ENCODE measurements at regions of chr6 and their contacts with region 1.

Region 1: GRCh38 chr6:157667211-157668008 is 155.6 kb upstream of the SNX9 start:
- DNase-seq: peak; percentile 82
- ATAC-seq: peak; percentile 74
- H3K4me3 ChIP-seq: no peak overlapping the region
- H3K4me3 Mint-ChIP-seq: peak overlapping the region; percentile 59
- H3K27ac ChIP-seq: no peak overlapping the region
- H3K27ac Mint-ChIP-seq: peak overlapping the region; percentile 48
- H3K4me1 ChIP-seq: peaks cover 9 to 10% of the 10 kb centered on the region in 2 donors
- H3K4me1 Mint-ChIP-seq: peaks cover 8% of the 10 kb centered on the region
- H3K27me3 ChIP-seq: no peaks in the 10 kb centered on the region
- H3K27me3 Mint-ChIP-seq: no peaks in the 10 kb centered on the region
- CTCF ChIP-seq: peak; percentile 95

Region 2: DNA sequence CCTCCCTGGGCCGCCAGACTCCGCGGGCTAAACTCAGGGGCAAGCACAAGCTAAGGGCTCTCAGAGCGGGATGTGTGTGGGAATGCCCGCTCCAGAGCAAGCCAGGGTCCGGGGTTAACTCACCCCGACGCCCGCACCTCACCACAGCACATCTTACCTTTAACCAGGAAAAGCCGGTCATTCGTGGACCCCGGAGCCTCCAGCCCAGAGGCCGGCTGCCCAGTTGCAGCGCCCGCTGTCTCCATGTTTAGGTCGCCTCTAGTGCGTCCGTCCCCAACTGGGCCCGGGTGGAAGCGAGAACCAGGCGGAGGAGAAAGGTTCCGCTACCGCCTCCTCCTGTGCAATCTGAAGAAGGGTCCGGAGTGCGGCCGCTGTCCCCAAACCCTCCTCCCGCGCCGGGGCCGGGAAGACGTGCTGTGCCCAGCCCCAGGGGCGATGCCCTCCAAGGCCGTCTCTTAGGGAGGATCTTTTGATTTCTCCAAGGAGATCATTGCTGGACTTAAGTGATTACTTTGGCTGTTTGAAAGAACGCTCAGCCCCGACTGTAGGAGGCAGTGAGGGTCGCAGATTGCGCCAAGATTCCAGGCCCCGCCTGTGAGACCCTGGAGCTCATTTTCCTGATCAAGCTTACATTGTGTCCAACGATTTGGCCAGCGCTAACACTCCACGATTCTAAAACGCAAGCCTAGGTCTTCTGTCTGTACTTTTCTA is 344.0 kb before region 1 on chr6 and contains the start of gene TMEM242:
- CTCF ChIA-PET with region 1: interaction called, 155 read pairs
- POLR2A ChIA-PET with region 1: interaction called, 3 read pairs
- intact Hi-C with region 1: no loop called
- DNase-seq: peak; percentile 93
- ATAC-seq: peak; percentile 92
- H3K4me3 ChIP-seq: peak within 1 kb of the TSS; percentile 61 to 93 (median 82)
- H3K4me3 Mint-ChIP-seq: peak within 1 kb of the TSS; percentile 97
- H3K27ac ChIP-seq: peak within 1 kb of the TSS; percentile 36 to 76
- H3K27ac Mint-ChIP-seq: peak within 1 kb of the TSS; percentile 92
- H3K4me1 ChIP-seq: peaks cover 10 to 11% of the 10 kb centered on the region in 2 donors
- H3K4me1 Mint-ChIP-seq: peaks cover 14% of the 10 kb centered on the region
- H3K27me3 ChIP-seq: peaks cover 0 to 13% (median 5%) of the 10 kb centered on the region in 4 experiments
- H3K27me3 Mint-ChIP-seq: peaks cover 29% of the 10 kb centered on the region
- CTCF ChIP-seq: peak; percentile 42
- total RNA-seq, gene TMEM242: 24.1 and 25.0 TPM in 2 replicates

Region 3: DNA sequence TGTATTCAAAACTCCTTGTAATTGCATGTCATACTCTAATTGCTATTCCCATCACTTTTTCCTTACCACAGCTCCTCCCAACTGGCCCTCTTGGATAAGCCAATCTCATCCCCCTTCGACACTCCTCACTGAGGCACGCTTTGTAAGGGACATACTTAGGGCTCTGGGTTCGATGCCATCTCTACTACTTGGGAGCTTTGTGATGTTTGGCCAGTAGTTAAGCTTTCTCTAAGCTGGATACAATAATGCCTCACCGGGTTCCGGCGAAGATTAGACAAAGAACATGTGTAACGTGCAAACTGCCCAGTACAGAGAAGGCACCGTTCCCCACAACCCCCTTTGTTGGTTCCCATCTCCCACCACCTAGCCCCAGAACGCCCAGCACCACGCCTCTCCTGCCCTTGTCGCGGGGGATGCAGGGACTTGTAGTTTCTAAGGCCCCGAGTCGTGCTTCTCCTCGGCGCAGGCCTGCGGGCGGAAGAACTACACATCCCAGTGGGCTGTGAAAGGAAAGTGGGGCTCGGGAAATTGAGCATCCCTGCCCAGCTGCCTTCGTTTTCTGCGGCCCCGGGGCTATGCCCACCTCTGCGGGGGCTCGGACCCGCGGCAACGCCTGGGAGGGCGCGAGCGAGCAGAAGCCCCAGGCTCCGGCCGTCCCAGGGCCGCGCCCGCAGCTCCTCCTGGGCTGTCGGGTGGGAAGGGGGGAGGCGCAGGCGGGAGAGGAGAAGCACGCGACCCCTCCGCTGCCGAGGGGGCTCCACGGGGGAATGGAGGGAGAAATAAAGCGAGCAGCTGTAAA is 287.6 kb before region 1 on chr6:
- CTCF ChIA-PET with region 1: interaction called, 6 read pairs
- POLR2A ChIA-PET with region 1: no interaction called
- intact Hi-C with region 1: loop called (anchors 1 kb)
- DNase-seq: peak; percentile 90
- ATAC-seq: peak; percentile 74
- H3K4me3 ChIP-seq: peak overlapping the region; percentile 42 to 99 (median 93)
- H3K4me3 Mint-ChIP-seq: peak overlapping the region; percentile 80
- H3K27ac ChIP-seq: peak overlapping the region; percentile 55 to 80
- H3K27ac Mint-ChIP-seq: peak overlapping the region; percentile 69
- H3K4me1 ChIP-seq: peaks cover 24 to 32% of the 10 kb centered on the region in 2 donors
- H3K4me1 Mint-ChIP-seq: peaks cover 26% of the 10 kb centered on the region
- H3K27me3 ChIP-seq: peaks cover 0 to 12% (median 5%) of the 10 kb centered on the region in 4 experiments
- H3K27me3 Mint-ChIP-seq: peaks cover 8% of the 10 kb centered on the region
- CTCF ChIP-seq: no peak

Region 4: DNA sequence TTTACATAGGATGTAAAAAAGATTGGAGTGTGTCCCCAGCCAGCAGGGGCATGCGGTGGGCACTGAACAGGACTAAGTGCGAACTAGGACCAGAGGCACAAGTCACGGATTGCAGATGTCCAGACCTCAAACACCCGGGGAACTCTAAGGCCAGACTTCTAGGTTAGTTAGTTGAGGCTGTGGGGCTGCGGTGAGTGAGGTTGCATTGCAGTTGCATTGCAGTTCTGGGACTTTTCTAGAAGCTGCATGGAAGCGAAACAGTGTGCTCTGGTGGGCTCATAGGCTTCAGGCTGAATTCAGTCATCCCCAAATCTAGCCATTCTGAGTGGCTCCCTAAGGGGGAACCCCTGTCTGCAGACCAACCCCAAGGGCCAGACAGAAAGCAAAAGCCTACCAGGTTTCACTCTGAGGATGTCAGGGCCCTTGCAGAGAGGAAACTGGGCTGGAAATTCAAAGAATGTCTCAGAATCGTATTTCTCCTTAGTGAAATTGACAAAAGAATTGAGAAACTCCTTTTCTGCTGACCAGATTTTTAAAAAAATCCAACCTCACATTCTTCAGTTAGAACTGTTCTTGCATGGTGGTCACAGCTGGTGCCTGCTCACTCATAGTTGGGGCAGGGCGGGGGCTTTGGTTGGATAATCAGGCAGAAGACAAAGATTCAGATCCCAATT is 103.7 kb before region 1 on chr6:
- CTCF ChIA-PET with region 1: interaction called, 12 read pairs
- POLR2A ChIA-PET with region 1: no interaction called
- intact Hi-C with region 1: loop called (anchors 2 kb)
- DNase-seq: peak; percentile 68
- ATAC-seq: peak; percentile 31
- H3K4me3 ChIP-seq: no peak overlapping the region
- H3K4me3 Mint-ChIP-seq: peak overlapping the region; percentile 56
- H3K27ac ChIP-seq: peak overlapping the region; percentile 11 to 45
- H3K27ac Mint-ChIP-seq: peak overlapping the region; percentile 90
- H3K4me1 ChIP-seq: peaks cover 80 to 84% of the 10 kb centered on the region in 2 donors
- H3K4me1 Mint-ChIP-seq: peaks cover 72% of the 10 kb centered on the region
- H3K27me3 ChIP-seq: no peaks in the 10 kb centered on the region
- H3K27me3 Mint-ChIP-seq: no peaks in the 10 kb centered on the region
- CTCF ChIP-seq: no peak

Region 5: GRCh38 chr6:157597446-157598312 is 69.7 kb before region 1 on chr6:
- CTCF ChIA-PET with region 1: interaction called, 17 read pairs
- POLR2A ChIA-PET with region 1: no interaction called
- intact Hi-C with region 1: loop called (anchors 5 kb)
- DNase-seq: peak; percentile 53
- ATAC-seq: peak; percentile 69
- H3K4me3 ChIP-seq: no peak overlapping the region
- H3K4me3 Mint-ChIP-seq: peak overlapping the region; percentile 7
- H3K27ac ChIP-seq: no peak overlapping the region
- H3K27ac Mint-ChIP-seq: peak overlapping the region; percentile 81
- H3K4me1 ChIP-seq: peaks cover 31 to 52% of the 10 kb centered on the region in 2 donors
- H3K4me1 Mint-ChIP-seq: peaks cover 50% of the 10 kb centered on the region
- H3K27me3 ChIP-seq: no peaks in the 10 kb centered on the region
- H3K27me3 Mint-ChIP-seq: no peaks in the 10 kb centered on the region
- CTCF ChIP-seq: peak; percentile 48

Region 6: DNA sequence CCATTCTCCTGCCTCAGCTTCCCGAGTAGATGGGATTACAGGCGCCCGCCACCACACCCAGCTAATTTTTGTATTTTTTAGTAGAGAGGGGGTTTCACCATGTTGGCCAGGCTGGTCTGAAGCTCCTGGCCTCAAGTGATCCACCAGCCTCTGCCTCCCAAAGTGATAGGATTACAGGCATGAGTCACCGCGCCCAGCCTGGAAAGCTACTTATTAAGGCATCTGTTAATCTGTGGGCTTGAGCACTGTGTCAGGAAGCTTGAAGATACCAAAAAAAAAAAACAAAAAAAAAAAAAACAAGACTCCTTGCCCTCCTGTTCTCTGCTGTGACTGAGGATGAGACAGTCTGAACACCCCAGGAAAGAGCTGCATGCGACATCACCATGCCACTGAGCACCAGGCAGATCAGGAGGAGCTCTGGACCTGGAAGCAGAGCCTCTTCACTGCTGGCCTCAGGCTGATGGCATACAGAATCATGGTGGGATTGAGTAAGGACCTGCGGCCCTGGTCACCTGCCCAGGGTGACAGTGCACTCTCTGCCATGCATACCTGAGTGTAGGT is 10.9 kb before region 1 on chr6:
- CTCF ChIA-PET with region 1: interaction called, 14 read pairs
- POLR2A ChIA-PET with region 1: no interaction called
- intact Hi-C with region 1: no loop called
- DNase-seq: no peak
- ATAC-seq: no peak
- H3K4me3 ChIP-seq: no peak overlapping the region
- H3K4me3 Mint-ChIP-seq: no peak overlapping the region
- H3K27ac ChIP-seq: no peak overlapping the region
- H3K27ac Mint-ChIP-seq: no peak overlapping the region
- H3K4me1 ChIP-seq: no peaks in the 10 kb centered on the region
- H3K4me1 Mint-ChIP-seq: no peaks in the 10 kb centered on the region
- H3K27me3 ChIP-seq: no peaks in the 10 kb centered on the region
- H3K27me3 Mint-ChIP-seq: no peaks in the 10 kb centered on the region
- CTCF ChIP-seq: no peak

Region 7: GRCh38 chr6:157946865-157947532 is 279.6 kb after region 1 on chr6:
- CTCF ChIA-PET with region 1: interaction called, 4 read pairs
- POLR2A ChIA-PET with region 1: no interaction called
- intact Hi-C with region 1: loop called (anchors 1 kb)
- DNase-seq: peak; percentile 45
- ATAC-seq: peak; percentile 24
- H3K4me3 ChIP-seq: no peak overlapping the region
- H3K4me3 Mint-ChIP-seq: no peak overlapping the region
- H3K27ac ChIP-seq: no peak overlapping the region
- H3K27ac Mint-ChIP-seq: peak overlapping the region; percentile 61
- H3K4me1 ChIP-seq: no peaks in the 10 kb centered on the region
- H3K4me1 Mint-ChIP-seq: no peaks in the 10 kb centered on the region
- H3K27me3 ChIP-seq: no peaks in the 10 kb centered on the region
- H3K27me3 Mint-ChIP-seq: no peaks in the 10 kb centered on the region
- CTCF ChIP-seq: peak; percentile 56